B cell (primary cell): ENCODE measurements at regions of chr18 and their contacts with region 1.

Region 1: GRCh38 chr18:23503038-23503962 is at the start of gene RMC1:
- DNase-seq: peak; percentile 98
- ATAC-seq: peak; percentile 90
- H3K4me3 ChIP-seq: peak within 1 kb of the TSS; percentile 68 to 98 (median 73)
- H3K4me3 Mint-ChIP-seq: peak within 1 kb of the TSS; percentile 94
- H3K27ac ChIP-seq: peak within 1 kb of the TSS; percentile 93 to 95
- H3K27ac Mint-ChIP-seq: peak within 1 kb of the TSS; percentile 94
- H3K4me1 ChIP-seq: peaks cover 55 to 72% of the 10 kb centered on the region in 2 donors
- H3K4me1 Mint-ChIP-seq: peaks cover 69% of the 10 kb centered on the region
- H3K27me3 ChIP-seq: no peaks in the 10 kb centered on the region
- H3K27me3 Mint-ChIP-seq: no peaks in the 10 kb centered on the region
- CTCF ChIP-seq: peak; percentile 18
- total RNA-seq, gene RMC1: 71.8 and 77.3 TPM in 2 replicates

Region 2: GRCh38 chr18:22933206-22933957 is 569.9 kb before region 1 on chr18 and contains the start of gene RBBP8:
- CTCF ChIA-PET with region 1: no interaction called
- POLR2A ChIA-PET with region 1: no interaction called
- intact Hi-C with region 1: loop called (anchors 1 kb)
- DNase-seq: peak; percentile 94
- ATAC-seq: peak; percentile 82
- H3K4me3 ChIP-seq: peak within 1 kb of the TSS; percentile 81 to 99 (median 90)
- H3K4me3 Mint-ChIP-seq: peak within 1 kb of the TSS; percentile 88
- H3K27ac ChIP-seq: peak within 1 kb of the TSS; percentile 99
- H3K27ac Mint-ChIP-seq: peak within 1 kb of the TSS; percentile 96
- H3K4me1 ChIP-seq: peaks cover 6 to 11% of the 10 kb centered on the region in 2 donors
- H3K4me1 Mint-ChIP-seq: peaks cover 18% of the 10 kb centered on the region
- H3K27me3 ChIP-seq: no peaks in the 10 kb centered on the region
- H3K27me3 Mint-ChIP-seq: no peaks in the 10 kb centered on the region
- CTCF ChIP-seq: no peak
- total RNA-seq, gene RBBP8: 18.0 and 19.3 TPM in 2 replicates

Region 3: DNA sequence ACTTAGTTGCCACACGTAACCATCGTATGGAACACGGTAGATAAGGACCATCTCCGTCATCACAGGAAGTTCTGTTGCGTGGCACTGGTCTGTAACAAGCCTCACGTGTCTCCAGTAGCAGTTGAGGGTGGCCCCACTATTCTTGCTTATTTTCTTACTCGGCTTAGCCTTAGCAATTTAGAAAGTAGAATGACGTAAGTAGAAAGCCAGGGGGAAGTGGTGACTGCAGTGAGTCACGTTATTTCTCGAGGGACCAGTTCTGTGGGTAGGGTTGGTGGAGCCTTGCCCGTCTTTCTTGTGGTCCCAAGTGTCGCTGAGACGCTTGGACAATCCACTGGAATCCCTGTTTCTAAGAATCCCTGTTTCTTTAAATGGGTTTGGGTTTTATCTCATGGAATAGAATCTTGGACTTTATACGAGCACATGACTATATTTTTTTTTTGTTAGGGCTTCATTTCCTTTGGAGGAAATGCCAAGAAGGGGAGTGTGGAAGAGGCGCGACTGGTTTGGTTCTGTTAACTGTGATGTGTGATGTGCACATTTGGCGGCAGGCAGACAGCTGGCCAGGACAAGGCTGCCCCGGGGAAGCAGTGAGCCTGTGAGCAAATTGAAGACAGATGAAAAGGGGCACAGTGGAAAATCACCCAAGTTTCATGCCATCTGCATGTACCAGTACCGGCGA is 271.8 kb before region 1 on chr18:
- CTCF ChIA-PET with region 1: no interaction called
- POLR2A ChIA-PET with region 1: no interaction called
- intact Hi-C with region 1: loop called (anchors 5 kb)
- DNase-seq: peak; percentile 96
- ATAC-seq: peak; percentile 76
- H3K4me3 ChIP-seq: peak overlapping the region in 3 of 5 experiments; percentile 4 to 14 (median 5)
- H3K4me3 Mint-ChIP-seq: peak overlapping the region; percentile 82
- H3K27ac ChIP-seq: peak overlapping the region; percentile 71 to 78
- H3K27ac Mint-ChIP-seq: peak overlapping the region; percentile 97
- H3K4me1 ChIP-seq: peaks cover 41 to 47% of the 10 kb centered on the region in 2 donors
- H3K4me1 Mint-ChIP-seq: peaks cover 66% of the 10 kb centered on the region
- H3K27me3 ChIP-seq: peaks cover 0 to 12% (median 0%) of the 10 kb centered on the region in 4 experiments
- H3K27me3 Mint-ChIP-seq: no peaks in the 10 kb centered on the region
- CTCF ChIP-seq: no peak

Region 4: GRCh38 chr18:23422672-23423418 is 80.5 kb before region 1 on chr18:
- CTCF ChIA-PET with region 1: interaction called, 11 read pairs
- POLR2A ChIA-PET with region 1: no interaction called
- intact Hi-C with region 1: no loop called
- DNase-seq: peak; percentile 55
- ATAC-seq: peak; percentile 87
- H3K4me3 ChIP-seq: peak overlapping the region in 1 of 5 experiments; percentile 38
- H3K4me3 Mint-ChIP-seq: peak overlapping the region; percentile 75
- H3K27ac ChIP-seq: peak overlapping the region; percentile 13 to 46
- H3K27ac Mint-ChIP-seq: peak overlapping the region; percentile 86
- H3K4me1 ChIP-seq: peaks cover 23 to 28% of the 10 kb centered on the region in 2 donors
- H3K4me1 Mint-ChIP-seq: peaks cover 30% of the 10 kb centered on the region
- H3K27me3 ChIP-seq: no peaks in the 10 kb centered on the region
- H3K27me3 Mint-ChIP-seq: no peaks in the 10 kb centered on the region
- CTCF ChIP-seq: no peak

Region 5: DNA sequence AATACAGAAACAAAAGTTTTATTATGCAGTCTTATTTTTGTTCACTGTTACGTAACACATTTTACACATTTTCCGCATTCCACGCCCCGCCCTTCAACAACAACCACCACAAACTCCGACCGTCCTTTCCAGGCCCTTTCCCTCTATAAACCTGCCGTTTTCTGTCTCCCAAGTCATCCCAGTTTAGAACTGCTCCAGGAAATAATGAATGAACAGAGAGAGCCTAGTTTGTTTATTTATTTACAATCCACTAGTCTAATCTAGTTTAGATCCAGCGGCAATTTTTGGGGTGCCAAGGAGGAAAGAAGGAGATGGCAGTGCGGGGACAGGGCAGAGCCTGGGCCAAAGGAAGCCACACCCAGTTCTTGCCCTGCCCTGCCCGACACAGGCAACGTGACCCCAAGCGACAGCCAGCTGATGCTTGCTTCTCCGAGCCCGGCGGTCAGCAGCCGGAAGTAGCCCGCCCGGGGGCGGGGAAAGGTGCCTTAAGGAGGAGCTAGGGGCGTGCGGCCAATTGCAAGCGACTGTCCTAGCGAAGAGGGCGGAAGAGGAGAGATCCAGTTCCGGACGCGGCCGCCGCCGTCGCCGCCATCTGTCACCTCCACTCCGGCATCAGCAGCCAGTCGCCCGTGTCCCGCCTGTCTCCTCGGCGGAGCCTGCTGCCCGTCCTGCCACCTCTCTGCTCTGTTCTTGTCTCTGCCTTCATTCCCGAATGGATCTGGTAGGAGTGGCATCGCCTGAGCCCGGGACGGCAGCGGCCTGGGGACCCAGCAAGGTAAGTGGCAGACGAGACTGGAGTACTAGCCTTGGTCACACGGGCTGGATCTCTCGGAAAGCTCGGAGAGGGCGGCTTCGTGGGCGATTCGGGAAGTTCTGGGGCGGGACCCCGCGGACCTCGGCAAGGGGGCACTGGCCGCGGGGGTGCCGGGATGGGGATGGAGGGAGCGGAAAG is 50.3 kb before region 1 on chr18 and contains the start of gene RIOK3:
- CTCF ChIA-PET with region 1: interaction called, 13 read pairs
- POLR2A ChIA-PET with region 1: interaction called, 7 read pairs
- intact Hi-C with region 1: loop called (anchors 1 kb)
- DNase-seq: peak; percentile 93
- ATAC-seq: peak; percentile 96
- H3K4me3 ChIP-seq: peak within 1 kb of the TSS; percentile 78 to 94 (median 89)
- H3K4me3 Mint-ChIP-seq: peak within 1 kb of the TSS; percentile 100
- H3K27ac ChIP-seq: peak within 1 kb of the TSS; percentile 84 to 96
- H3K27ac Mint-ChIP-seq: peak within 1 kb of the TSS; percentile 90
- H3K4me1 ChIP-seq: peaks cover 34 to 36% of the 10 kb centered on the region in 2 donors
- H3K4me1 Mint-ChIP-seq: peaks cover 59% of the 10 kb centered on the region
- H3K27me3 ChIP-seq: no peaks in the 10 kb centered on the region
- H3K27me3 Mint-ChIP-seq: no peaks in the 10 kb centered on the region
- CTCF ChIP-seq: no peak
- total RNA-seq, gene RIOK3: 83.4 and 85.1 TPM in 2 replicates

Region 6: GRCh38 chr18:23487738-23488570 is 15.3 kb before region 1 on chr18:
- CTCF ChIA-PET with region 1: interaction called, 61 read pairs
- POLR2A ChIA-PET with region 1: interaction called, 28 read pairs
- intact Hi-C with region 1: loop called (anchors 1 kb)
- DNase-seq: peak; percentile 69
- ATAC-seq: peak; percentile 85
- H3K4me3 ChIP-seq: peak overlapping the region; percentile 33 to 64 (median 51)
- H3K4me3 Mint-ChIP-seq: peak overlapping the region; percentile 89
- H3K27ac ChIP-seq: peak overlapping the region; percentile 94 to 96
- H3K27ac Mint-ChIP-seq: peak overlapping the region; percentile 98
- H3K4me1 ChIP-seq: peaks cover 53 to 56% of the 10 kb centered on the region in 2 donors
- H3K4me1 Mint-ChIP-seq: peaks cover 54% of the 10 kb centered on the region
- H3K27me3 ChIP-seq: no peaks in the 10 kb centered on the region
- H3K27me3 Mint-ChIP-seq: no peaks in the 10 kb centered on the region
- CTCF ChIP-seq: no peak

Region 7: DNA sequence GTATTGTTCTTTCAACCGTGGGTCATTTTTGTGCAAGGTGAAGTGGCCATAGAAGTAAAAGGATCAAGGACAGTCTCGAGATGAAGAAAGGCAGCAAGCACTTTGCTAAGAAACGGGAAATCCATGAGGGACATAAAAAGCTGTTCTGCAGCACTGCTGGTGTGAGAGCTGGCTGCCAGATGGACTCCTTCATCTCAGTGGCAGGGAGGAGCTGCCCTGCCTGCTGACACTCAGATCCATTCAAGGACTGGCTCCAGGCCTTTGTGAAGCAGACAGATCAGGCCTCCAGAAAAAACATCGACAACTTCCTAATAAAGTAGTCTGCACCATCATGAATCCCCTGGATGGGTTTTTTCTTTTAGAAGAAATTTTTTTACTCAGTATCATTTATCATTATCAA is 29.5 kb after region 1 on chr18:
- CTCF ChIA-PET with region 1: no interaction called
- POLR2A ChIA-PET with region 1: no interaction called
- intact Hi-C with region 1: no loop called
- DNase-seq: no peak
- ATAC-seq: no peak
- H3K4me3 ChIP-seq: no peak overlapping the region
- H3K4me3 Mint-ChIP-seq: no peak overlapping the region
- H3K27ac ChIP-seq: no peak overlapping the region
- H3K27ac Mint-ChIP-seq: peak overlapping the region; percentile 53
- H3K4me1 ChIP-seq: no peaks in the 10 kb centered on the region
- H3K4me1 Mint-ChIP-seq: no peaks in the 10 kb centered on the region
- H3K27me3 ChIP-seq: no peaks in the 10 kb centered on the region
- H3K27me3 Mint-ChIP-seq: no peaks in the 10 kb centered on the region
- CTCF ChIP-seq: no peak

Region 8: GRCh38 chr18:23586249-23587196 is 83.2 kb after region 1 on chr18 and contains the start of gene NPC1:
- CTCF ChIA-PET with region 1: interaction called, 6 read pairs
- POLR2A ChIA-PET with region 1: no interaction called
- intact Hi-C with region 1: loop called (anchors 1 kb)
- DNase-seq: peak; percentile 93
- ATAC-seq: peak; percentile 87
- H3K4me3 ChIP-seq: peak within 1 kb of the TSS; percentile 79 to 99 (median 97)
- H3K4me3 Mint-ChIP-seq: peak within 1 kb of the TSS; percentile 93
- H3K27ac ChIP-seq: peak within 1 kb of the TSS; percentile 99
- H3K27ac Mint-ChIP-seq: peak within 1 kb of the TSS; percentile 97
- H3K4me1 ChIP-seq: peaks cover 13 to 21% of the 10 kb centered on the region in 2 donors
- H3K4me1 Mint-ChIP-seq: peaks cover 23% of the 10 kb centered on the region
- H3K27me3 ChIP-seq: no peaks in the 10 kb centered on the region
- H3K27me3 Mint-ChIP-seq: no peaks in the 10 kb centered on the region
- CTCF ChIP-seq: peak; percentile 95
- total RNA-seq, gene NPC1: 44.4 and 48.5 TPM in 2 replicates